ENCODE measurements at regions of chr1 and their contacts with region 1.

Region 1: DNA sequence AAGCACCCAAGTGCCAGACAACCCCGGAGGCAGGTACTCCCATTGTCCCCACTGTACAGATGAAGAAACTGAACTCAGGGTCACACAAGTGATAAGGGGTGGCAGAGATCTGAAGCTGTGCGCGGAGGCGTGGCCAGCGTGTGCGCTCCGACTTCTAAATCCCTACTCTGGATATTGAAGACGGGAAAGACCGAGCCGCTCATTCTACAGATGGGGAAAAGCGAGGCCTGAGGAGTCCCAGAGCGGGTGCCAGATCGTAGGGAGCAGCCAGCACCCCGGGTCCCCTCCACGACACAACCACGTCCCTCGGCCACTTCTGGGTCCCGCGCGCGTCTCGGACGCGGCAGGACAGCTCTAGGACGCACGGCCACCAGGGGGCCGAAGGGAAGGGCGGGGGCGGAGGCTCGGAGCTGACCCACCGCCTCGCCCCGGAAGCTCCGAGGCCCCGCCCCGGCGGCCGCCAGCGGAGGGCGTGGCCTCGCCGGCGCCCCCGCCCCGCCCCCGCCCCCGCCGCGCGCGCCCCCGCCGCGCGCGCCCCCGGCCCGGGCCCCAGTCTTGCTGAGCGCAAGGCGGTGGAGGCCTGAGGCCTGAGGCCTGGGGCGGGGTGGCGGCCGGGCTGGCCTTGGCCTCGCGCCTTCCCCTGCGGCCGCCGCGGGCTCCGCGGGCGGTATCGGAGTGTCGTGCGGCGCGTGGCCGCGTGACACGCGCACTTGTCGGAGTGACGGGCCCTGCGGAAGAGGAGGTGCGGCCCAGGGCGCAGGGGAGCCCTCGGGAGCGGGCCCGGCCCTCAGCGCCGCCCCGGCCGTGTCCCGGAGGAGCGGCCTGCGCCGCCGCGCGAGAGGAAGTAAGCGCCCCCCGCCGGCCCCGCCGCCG is at the start of gene H6PD:
- DNase-seq: peak; percentile 99
- CTCF ChIP-seq: peak; percentile 83

Region 2: DNA sequence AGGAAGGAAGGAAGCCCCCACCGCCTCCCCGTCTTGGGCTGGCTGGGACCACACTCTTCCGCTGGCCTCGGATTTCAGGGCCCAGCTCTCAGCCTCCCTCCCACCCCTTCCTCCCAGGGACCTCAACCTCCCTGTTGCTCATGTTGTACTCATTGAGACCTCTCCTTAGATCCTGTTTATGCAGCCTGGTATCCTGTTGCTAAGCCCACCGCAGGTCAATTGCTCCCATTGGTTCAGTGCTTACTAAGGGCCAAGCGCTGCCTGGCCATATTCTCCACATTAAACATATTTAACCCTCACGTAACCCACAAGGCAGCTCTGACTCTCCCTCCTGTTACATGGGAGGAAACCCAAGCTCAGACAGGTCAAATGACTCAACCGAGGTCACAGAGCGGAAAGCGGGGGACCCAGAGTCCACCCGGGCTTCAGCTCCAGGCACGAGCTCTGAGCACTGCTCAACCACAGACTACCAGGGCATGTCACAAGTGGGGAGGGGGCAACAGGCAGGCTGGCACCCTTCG is 23.1 kb before region 1 on chr1:
- CTCF ChIA-PET with region 1: interaction called, 10 read pairs
- POLR2A ChIA-PET with region 1: no interaction called
- DNase-seq: no peak
- CTCF ChIP-seq: no peak

Region 3: GRCh38 chr1:9244501-9245229 is 10.2 kb after region 1 on chr1:
- CTCF ChIA-PET with region 1: interaction called, 11 read pairs
- POLR2A ChIA-PET with region 1: interaction called, 7 read pairs
- DNase-seq: no peak
- CTCF ChIP-seq: no peak